Mammary epithelial cell (primary cell): ENCODE measurements at regions of chr2 and their contacts with region 1.

Region 1: GRCh38 chr2:55934337-55934736 is 10.8 kb upstream of the EFEMP1 start:
- DNase-seq: no peak
- H3K4me3 ChIP-seq: no peak overlapping the region
- H3K27ac ChIP-seq: no peak overlapping the region
- H3K4me1 ChIP-seq: no peaks in the 10 kb centered on the region
- H3K27me3 ChIP-seq: no peaks in the 10 kb centered on the region
- CTCF ChIP-seq: no peak

Region 2: GRCh38 chr2:54999182-54999581 is 935.2 kb before region 1 on chr2:
- CTCF ChIA-PET with region 1: no interaction called
- dilution Hi-C with region 1: no loop called
- in situ Hi-C with region 1: no loop called
- intact Hi-C with region 1: no loop called
- DNase-seq: peak; percentile 52
- H3K4me3 ChIP-seq: no peak overlapping the region
- H3K27ac ChIP-seq: peak overlapping the region; percentile 36
- H3K4me1 ChIP-seq: peaks cover 15% of the 10 kb centered on the region
- H3K27me3 ChIP-seq: no peaks in the 10 kb centered on the region
- CTCF ChIP-seq: no peak

Region 3: DNA sequence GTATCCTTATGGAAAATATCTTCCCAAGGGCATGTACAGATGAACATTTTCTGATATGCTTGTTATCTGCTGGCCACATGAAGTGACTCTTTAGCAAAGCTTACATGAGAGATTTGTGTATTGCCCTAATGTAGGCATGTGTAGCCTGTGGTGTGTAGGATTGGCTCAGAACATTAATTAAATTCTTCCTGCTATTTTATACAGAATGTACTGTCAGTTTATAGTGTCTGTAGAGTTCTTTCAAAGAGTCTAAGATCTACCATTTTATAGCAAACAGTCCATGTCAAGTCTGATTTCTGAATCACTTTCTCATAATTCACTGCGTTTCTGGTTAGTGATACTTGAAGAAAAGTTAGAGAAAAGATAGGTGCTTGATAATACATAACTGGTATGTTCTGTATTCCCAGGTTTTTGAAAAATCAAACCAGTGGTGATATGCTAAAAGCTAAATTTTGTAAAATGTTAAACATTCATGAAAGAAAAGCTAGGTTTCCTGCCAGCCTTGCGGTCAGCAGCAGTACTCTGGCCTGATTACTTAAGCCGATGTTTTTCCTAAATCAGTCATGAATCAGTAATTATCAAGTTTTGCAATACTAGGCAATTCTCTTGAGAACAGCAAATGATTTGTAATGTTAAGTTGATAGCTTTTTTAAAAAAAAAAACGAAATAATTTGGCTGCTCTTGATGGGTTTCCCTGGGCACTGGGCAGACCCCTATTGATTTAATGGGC is 20.1 kb after region 1 on chr2:
- CTCF ChIA-PET with region 1: no interaction called
- dilution Hi-C with region 1: no loop called
- in situ Hi-C with region 1: no loop called
- intact Hi-C with region 1: loop called (anchors 2 kb)
- DNase-seq: no peak
- H3K4me3 ChIP-seq: no peak overlapping the region
- H3K27ac ChIP-seq: no peak overlapping the region
- H3K4me1 ChIP-seq: peaks cover 20% of the 10 kb centered on the region
- H3K27me3 ChIP-seq: no peaks in the 10 kb centered on the region
- CTCF ChIP-seq: no peak

Region 4: DNA sequence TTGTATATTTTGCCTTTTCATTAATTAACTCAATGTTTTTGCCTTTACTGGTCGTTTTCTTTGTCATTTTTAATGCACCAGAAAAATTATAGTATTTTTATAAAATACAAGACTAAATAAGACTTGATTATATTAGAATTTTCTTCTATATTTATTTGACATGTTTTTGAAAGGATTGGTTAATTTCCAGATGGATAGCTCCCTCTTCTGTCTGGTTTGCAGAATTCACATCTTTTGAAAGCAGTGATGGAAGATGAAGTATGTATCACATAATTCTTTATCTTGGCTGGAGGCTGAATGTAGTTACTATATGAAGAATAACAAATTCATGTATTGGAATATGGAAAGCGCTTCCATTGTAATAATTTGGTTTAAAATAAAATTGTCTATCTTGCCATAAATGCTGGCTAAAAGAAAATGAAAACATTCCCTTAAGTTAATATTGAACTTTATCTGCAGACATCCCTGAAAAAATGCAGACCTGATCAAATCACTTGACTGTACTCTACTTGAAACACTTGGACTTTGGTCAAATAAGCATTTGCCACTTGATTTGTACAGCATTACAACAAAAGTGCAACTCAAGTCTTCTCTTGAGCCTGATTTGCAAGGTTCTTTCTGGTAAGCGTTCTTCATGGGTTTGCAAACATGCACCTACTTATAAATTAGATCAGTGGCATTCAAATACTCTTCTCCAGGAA is 75.6 kb after region 1 on chr2:
- CTCF ChIA-PET with region 1: no interaction called
- dilution Hi-C with region 1: no loop called
- in situ Hi-C with region 1: no loop called
- intact Hi-C with region 1: no loop called
- DNase-seq: peak; percentile 35
- H3K4me3 ChIP-seq: no peak overlapping the region
- H3K27ac ChIP-seq: no peak overlapping the region
- H3K4me1 ChIP-seq: no peaks in the 10 kb centered on the region
- H3K27me3 ChIP-seq: no peaks in the 10 kb centered on the region
- CTCF ChIP-seq: peak; percentile 47 to 68